ENCODE measurements at regions of chr5 and their contacts with region 1.

Region 1: GRCh38 chr5:72125941-72126620 is 18.8 kb downstream of the MAP1B start:
- DNase-seq: no peak
- H3K4me3 ChIP-seq: peak overlapping the region in 1 of 2 donors; percentile 14
- H3K27ac ChIP-seq: peak overlapping the region; percentile 44 to 93
- H3K4me1 ChIP-seq: peaks cover 16 to 82% of the 10 kb centered on the region in 2 donors
- H3K27me3 ChIP-seq: no peaks in the 10 kb centered on the region
- CTCF ChIP-seq: no peak

Region 2: DNA sequence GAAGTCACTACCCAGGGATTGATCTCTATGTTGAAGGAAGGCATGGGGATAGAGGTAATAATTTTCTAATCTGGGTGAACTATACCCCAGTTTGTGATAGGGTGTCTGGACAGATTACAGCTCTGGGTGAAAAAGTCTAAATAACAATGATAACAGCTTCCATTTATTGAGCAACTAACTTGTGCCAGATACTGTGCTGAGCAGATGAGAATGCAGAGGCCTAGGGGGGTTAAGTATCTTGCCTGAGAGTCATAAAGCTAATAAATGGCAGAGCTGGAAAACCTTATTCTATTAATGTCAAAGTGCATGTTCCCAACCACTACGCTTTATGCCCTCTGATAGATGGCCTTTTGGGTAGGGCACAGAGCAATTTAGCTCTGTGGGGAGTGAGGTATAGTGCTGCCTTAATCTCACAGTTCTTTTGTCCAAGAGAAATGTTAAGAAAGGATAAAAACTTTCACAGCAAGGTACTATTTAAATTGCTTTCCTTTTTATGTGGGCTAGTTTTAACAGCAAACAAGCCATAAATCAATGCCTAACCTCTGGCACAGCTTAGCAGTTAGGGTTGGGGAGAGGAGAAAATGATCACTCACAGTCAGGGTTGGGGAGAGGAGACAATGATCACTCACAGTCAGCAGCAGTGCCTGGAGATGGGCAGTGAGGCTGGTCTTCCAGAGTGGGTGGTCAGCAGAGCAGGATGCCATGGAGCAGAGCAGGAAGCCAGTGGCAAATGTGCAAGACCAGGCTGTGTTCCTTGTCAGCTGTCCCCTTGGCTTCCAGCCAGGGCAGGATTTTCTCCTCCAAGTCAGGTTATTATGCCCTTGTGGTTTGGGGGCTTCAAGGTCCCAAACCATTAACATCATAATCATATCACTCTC is 220.0 kb before region 1 on chr5:
- intact Hi-C with region 1: no loop called
- DNase-seq: no peak
- H3K4me3 ChIP-seq: no peak overlapping the region
- H3K27ac ChIP-seq: peak overlapping the region; percentile 30 to 53
- H3K4me1 ChIP-seq: peaks cover 11 to 12% of the 10 kb centered on the region in 2 donors
- H3K27me3 ChIP-seq: no peaks in the 10 kb centered on the region
- CTCF ChIP-seq: no peak

Region 3: GRCh38 chr5:72185496-72186329 is 59.6 kb after region 1 on chr5:
- intact Hi-C with region 1: loop called (anchors 5 kb)
- DNase-seq: no peak
- H3K4me3 ChIP-seq: peak overlapping the region in 1 of 2 donors; percentile 3
- H3K27ac ChIP-seq: peak overlapping the region; percentile 15 to 88
- H3K4me1 ChIP-seq: peaks cover 16 to 69% of the 10 kb centered on the region in 2 donors
- H3K27me3 ChIP-seq: no peaks in the 10 kb centered on the region
- CTCF ChIP-seq: no peak